ENCODE measurements at regions of chr14 and their contacts with region 1.

Region 1: DNA sequence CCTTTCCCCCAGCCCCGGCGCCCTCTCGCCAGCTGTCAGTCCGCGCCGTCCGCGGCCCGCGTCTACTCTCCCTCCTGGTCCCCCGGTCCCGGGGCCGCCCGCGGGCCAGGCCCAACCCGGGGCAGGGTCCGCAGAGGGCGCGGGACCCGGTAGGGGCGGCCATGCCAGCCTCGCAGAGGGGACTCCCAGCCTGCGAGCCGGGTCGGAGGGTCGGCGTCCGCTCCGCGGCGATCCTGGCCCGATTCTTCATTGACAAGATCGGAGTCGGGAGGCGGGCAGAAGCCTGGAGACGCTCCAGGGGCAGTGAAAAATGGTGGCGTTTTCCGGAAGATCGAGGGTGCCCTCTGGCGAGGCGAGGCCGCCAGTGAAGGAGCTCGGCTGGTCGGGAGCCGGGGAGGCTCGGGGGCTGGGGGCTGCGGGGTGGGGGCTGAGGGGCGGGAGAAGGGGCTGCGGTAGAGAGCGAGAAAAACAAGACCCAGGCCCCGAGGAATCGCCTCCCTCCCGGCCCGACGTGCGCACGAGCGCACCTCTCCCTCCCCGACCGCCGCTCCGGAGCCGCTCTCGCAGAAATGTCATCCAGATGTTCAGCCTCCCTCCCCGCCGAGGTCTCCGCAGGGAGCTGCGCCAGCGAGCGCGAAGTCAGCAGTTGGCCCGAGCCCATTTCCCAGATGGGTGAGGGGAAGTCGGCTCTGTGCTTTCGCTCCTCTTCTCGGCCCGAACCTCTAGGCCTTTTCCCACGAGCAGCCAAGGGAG is 647 bp upstream of the TGFB3 start:
- DNase-seq: peak; percentile 75 to 81 (median 79)
- H3K4me3 ChIP-seq: peak overlapping the region; percentile 63 to 89 (median 78)
- H3K27ac ChIP-seq: peak overlapping the region in 1 of 2 experiments; percentile 62
- H3K4me1 ChIP-seq: peaks cover 6 to 49% (median 40%) of the 10 kb centered on the region in 4 experiments
- H3K27me3 ChIP-seq: peaks cover 0 to 2% (median 0%) of the 10 kb centered on the region in 5 experiments

Region 2: GRCh38 chr14:75906676-75907280 is 75.7 kb before region 1 on chr14:
- CTCF ChIA-PET with region 1: interaction called, 37 read pairs
- POLR2A ChIA-PET with region 1: no interaction called
- DNase-seq: peak; percentile 59 to 83 (median 79)
- H3K4me3 ChIP-seq: no peak overlapping the region
- H3K27ac ChIP-seq: no peak overlapping the region
- H3K4me1 ChIP-seq: peaks cover 7 to 26% (median 17%) of the 10 kb centered on the region in 4 experiments
- H3K27me3 ChIP-seq: no peaks in the 10 kb centered on the region

Region 3: DNA sequence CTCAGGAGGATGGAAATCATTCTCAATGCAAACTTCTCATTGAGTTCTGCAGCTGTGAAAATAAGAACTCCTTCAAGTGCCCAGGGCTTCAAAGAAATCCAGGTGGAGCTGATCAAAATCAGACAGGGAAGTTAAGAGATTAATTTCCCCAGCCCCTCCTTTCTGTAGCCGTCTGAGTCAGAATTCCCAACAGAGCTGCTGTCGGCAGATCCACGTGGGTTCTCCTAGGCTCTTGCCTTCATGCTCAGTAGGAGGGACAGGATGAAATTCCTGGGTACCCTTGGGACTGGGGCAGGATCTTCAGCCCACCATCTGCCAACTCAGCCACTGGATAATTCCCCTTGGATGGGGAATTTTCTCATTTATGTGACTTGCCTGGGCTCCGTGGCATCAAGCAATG is 14.0 kb before region 1 on chr14:
- CTCF ChIA-PET with region 1: interaction called, 34 read pairs
- POLR2A ChIA-PET with region 1: no interaction called
- DNase-seq: no peak
- H3K4me3 ChIP-seq: no peak overlapping the region
- H3K27ac ChIP-seq: no peak overlapping the region
- H3K4me1 ChIP-seq: no peaks in the 10 kb centered on the region
- H3K27me3 ChIP-seq: no peaks in the 10 kb centered on the region

Region 4: DNA sequence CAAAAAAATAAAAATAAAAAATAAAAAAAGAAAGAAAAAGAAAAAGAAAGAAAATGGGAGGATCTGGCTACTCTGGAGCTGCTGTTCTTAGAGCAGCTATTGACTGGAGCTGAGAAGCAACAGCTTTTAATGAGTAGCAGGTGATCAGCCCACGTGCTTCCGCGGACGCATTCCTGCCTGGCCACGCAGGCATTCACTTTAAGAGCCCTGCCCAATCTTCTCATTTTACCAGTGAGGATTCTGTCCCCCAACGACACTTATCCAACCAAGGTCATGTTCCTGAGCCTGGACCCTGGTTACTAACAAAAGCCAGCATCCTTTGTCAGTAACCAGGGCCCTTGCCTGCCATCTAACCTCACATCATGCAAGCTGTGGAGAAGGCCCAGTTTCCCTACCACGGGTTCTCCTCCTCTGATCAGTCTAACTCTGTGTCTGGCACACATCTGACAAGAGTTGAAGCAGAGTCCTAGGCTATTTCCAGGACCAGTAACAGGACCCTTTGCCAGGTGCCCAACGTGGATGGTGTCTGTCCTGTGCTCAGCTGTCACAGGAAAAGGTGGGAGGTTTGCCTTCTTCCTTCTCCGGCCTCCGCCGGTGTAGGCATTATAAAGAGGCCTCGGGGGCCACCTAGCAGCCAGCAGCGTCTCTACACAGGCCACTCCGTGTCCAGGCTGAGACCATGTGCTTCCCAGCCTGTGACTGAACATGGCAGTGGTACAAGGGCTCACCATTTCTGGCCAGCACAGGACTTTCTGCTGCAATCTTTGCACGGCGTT is 108.4 kb after region 1 on chr14:
- CTCF ChIA-PET with region 1: no interaction called
- POLR2A ChIA-PET with region 1: no interaction called
- DNase-seq: peak in 2 of 3 donors; percentile 11 to 14
- H3K4me3 ChIP-seq: no peak overlapping the region
- H3K27ac ChIP-seq: no peak overlapping the region
- H3K4me1 ChIP-seq: no peaks in the 10 kb centered on the region
- H3K27me3 ChIP-seq: peaks cover 0 to 4% (median 0%) of the 10 kb centered on the region in 5 experiments